ENCODE measurements at regions of chr16 and their contacts with region 1.

Region 1: GRCh38 chr16:10964039-10964890 is 19.9 kb downstream of the CLEC16A start:
- DNase-seq: peak; percentile 65
- H3K4me3 ChIP-seq: no peak overlapping the region
- H3K27ac ChIP-seq: peak overlapping the region; percentile 33
- H3K27me3 ChIP-seq: no peaks in the 10 kb centered on the region
- CTCF ChIP-seq: peak; percentile 96

Region 2: GRCh38 chr16:10949370-10949970 is 14.8 kb before region 1 on chr16:
- CTCF ChIA-PET with region 1: interaction called, 19 read pairs
- POLR2A ChIA-PET with region 1: no interaction called
- DNase-seq: no peak
- H3K4me3 ChIP-seq: no peak overlapping the region
- H3K27ac ChIP-seq: no peak overlapping the region
- H3K27me3 ChIP-seq: no peaks in the 10 kb centered on the region
- CTCF ChIP-seq: no peak

Region 3: DNA sequence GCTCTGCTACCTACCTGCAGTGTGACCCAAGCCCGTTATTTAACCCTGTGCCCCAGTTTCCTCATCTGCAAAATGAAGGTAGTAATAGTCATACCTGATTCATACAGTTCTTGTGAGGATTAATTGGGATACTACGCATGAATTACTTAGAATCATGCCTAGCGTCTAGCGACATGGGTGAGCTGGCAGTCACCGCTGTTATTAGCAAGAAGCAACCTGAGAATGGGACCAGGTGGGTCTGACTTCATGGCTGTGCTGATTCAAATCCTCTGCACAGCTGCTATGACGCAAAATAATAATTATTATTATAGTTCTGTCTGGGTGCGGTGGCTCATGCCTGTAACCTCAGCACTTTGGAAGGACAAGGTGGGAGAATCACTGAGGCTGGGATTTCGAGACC is 283.9 kb after region 1 on chr16:
- CTCF ChIA-PET with region 1: interaction called, 10 read pairs
- POLR2A ChIA-PET with region 1: interaction called, 7 read pairs
- DNase-seq: no peak
- H3K4me3 ChIP-seq: no peak overlapping the region
- H3K27ac ChIP-seq: no peak overlapping the region
- H3K27me3 ChIP-seq: no peaks in the 10 kb centered on the region
- CTCF ChIP-seq: no peak

Region 4: GRCh38 chr16:11356573-11357331 is 392.5 kb after region 1 on chr16:
- CTCF ChIA-PET with region 1: interaction called, 47 read pairs
- POLR2A ChIA-PET with region 1: no interaction called
- DNase-seq: no peak
- H3K4me3 ChIP-seq: no peak overlapping the region
- H3K27ac ChIP-seq: no peak overlapping the region
- H3K27me3 ChIP-seq: no peaks in the 10 kb centered on the region
- CTCF ChIP-seq: peak; percentile 79

Region 5: DNA sequence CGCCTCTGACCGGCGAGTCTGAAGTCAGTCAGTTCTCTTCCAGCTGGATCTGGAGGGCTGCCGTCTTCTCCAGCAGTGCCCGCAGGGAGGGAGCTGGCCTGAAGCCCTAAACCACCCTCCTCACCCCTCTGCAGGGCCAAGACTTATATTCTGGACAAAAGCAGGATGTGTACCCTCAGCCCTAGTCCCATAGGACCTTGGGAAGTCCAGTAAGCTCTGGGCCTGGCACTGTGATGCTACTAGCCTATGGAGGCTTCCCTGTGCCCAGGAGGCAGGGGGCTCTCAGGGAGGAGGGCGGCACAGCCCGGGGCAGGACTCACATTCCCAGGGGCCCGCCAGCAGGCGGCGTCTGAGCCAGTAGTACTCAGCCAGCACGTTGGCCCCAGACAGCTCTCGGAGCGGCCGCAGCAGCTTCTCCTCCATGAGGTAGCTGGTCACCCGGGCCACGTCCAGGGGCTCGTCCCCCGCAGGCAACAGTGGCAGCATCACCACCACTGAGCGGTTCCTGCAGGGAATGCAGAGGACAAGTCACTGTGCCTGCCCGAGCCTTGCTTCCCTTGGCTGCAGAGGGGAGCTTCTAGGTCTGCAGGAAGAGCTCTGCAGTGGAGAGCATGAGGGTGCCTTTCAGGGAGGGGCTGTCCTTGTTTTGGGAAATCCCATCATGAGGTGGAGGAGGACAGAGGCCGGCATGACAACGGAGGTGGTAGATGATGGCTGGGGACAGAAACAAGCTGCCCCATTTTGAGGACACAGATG is 422.7 kb after region 1 on chr16:
- CTCF ChIA-PET with region 1: interaction called, 14 read pairs
- POLR2A ChIA-PET with region 1: no interaction called
- DNase-seq: no peak
- H3K4me3 ChIP-seq: no peak overlapping the region
- H3K27ac ChIP-seq: no peak overlapping the region
- H3K27me3 ChIP-seq: peaks cover 10% of the 10 kb centered on the region
- CTCF ChIP-seq: peak; percentile 75

Region 6: DNA sequence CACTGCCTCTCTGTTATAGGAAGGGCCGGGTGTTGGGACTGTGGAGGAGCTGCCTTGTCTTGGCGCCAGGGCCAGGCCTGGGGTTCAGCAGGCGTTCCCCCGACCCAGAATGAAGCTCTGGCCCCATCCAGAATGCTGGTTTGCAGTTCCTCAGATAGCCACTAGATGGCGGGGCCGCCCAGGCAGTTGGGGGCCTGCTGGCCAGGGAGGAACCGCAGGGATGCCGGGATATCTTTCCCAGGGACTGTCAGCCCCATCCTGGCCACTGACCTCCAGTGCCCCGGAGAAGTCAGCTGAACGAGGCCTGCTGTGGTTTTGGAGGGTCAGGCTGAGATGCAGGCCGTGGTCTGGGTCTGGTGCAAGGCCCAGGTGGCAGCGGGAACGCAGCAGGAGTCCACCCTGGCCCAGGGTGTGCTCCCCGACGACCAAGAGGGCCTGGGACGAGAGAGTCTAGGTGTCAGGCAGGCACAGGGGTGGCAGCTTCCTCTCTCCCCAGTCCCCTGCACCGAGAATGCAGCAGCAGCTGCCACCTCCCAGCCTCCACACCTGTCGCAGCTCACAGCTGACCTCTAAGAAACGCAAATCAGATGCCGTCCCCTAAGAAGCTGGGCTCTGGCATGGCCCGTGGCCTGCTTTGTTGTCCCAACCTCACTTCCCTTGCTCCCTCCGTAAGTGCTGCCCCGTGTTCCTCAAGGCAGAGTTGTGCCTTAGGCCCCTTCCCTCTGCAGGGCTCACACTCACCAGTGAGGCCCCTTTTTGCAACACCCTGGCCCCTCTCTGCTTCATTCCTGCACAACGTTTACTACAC is 432.2 kb after region 1 on chr16:
- CTCF ChIA-PET with region 1: interaction called, 10 read pairs
- POLR2A ChIA-PET with region 1: no interaction called
- DNase-seq: peak; percentile 27
- H3K4me3 ChIP-seq: no peak overlapping the region
- H3K27ac ChIP-seq: no peak overlapping the region
- H3K27me3 ChIP-seq: no peaks in the 10 kb centered on the region
- CTCF ChIP-seq: peak; percentile 98